ENCODE measurements at regions of chr5 and their contacts with region 1.

Region 1: DNA sequence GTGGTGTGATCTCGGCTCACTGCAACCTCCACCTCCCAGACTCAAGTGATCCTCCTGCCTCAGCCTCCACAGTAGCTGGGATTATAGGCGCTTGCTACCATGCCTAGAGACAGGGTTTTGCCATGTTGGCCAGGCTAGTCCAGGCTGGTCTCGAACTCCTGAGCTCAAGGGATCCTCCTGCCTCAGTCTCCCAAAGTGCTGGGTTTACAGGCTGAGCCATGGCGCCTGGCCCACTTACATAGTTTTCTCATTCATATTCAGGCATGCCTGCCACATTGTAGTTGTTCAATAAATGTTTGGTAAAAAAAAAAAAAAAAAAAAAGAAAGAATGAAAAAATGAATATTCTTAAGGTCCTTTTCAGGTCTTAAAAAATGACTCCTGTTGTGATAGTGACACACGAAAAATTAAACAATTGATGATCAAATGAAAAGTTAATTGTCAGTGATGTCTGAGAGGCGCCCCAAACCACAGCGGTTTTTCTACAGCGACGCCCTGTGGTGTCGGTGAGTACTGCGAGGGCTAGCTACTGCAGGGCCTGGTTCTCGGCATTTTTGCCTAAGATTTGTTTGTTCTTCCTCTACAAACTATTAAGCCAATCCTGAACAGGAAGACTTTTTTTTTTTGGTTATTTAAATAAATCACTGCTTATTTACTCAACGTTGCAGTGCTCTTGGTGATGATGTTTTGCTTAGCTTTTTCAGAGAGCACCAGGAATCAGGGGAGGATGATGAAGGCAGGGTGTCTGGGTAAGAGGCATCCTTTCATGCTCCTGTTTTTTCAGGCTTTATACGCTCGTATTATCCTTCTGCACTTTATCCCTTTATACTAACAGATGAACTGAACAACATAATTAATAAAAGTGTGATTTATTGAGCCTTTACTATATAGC is 67.0 kb upstream of the DPYSL3 start:
- DNase-seq: peak; percentile 84
- ATAC-seq: peak; percentile 87

Region 2: DNA sequence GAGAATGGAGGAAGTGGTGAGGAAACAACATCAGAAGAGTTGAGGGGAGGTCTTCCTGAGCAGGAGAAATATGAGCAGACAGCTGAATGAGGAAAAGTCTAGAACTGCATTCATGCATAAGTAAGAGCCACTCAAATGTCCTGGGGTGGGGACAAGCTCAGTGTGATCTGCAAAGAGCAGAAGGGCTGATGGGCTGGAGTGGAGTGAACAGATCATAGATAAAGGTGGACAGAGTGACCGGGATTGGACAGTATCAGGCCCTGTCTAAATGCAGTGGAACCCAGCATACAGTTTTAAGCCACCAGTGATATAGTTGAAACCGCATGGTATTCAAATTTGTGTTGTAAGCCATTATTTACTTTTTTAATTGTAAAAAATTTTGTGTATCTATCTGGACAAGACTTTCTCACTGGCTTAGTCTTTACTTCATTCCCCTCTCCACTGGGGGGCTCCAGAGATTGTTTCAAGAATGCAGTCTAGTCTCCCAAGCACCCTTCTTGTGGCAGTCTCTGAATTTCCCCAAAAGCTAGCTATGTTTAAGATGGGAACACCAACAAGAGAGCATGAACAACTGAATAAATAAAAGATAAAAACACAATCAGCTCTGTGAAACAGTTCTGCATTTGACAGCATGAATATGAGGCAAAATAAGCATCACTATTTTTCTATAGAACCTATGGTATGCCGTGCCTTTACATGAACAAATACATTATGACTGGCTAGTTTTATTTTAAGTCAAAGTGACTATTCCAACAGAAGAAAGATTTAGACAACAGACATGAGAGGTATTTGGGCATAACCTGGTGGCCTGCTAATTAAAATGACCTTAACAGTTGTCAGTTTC is 352.7 kb before region 1 on chr5:
- intact Hi-C with region 1: loop called (anchors 10 kb)
- DNase-seq: peak; percentile 60
- ATAC-seq: peak; percentile 89

Region 3: GRCh38 chr5:147782110-147783028 is 205.5 kb after region 1 on chr5 and contains the start of gene JAKMIP2:
- intact Hi-C with region 1: no loop called
- DNase-seq: peak; percentile 87
- ATAC-seq: peak; percentile 99
- total RNA-seq, gene JAKMIP2: 14.6 TPM